HCT116 (cell line): ENCODE measurements at regions of chr15 and their contacts with region 1.

Region 1: GRCh38 chr15:65869127-65869953 is at the start of gene RAB11A:
- DNase-seq: peak; percentile 94
- ATAC-seq: peak; percentile 95
- H3K4me3 ChIP-seq: peak within 1 kb of the TSS; percentile 79 to 94
- H3K27ac ChIP-seq: peak within 1 kb of the TSS; percentile 74
- H3K4me1 ChIP-seq: peaks cover 11 to 30% of the 10 kb centered on the region in 2 experiments
- H3K27me3 ChIP-seq: no peaks in the 10 kb centered on the region
- CTCF ChIP-seq: peak in 1 of 3 experiments; percentile 27; a peak in 2 of 6 replicates
- POLR2A ChIP-seq: peak; percentile 87
- RAD21 ChIP-seq: no peak
- total RNA-seq, gene RAB11A: 234 TPM

Region 2: GRCh38 chr15:65766422-65767263 is 102.7 kb before region 1 on chr15:
- CTCF ChIA-PET with region 1: no interaction called
- POLR2A ChIA-PET with region 1: no interaction called
- RAD21 ChIA-PET with region 1: no interaction called
- intact Hi-C with region 1: no loop called
- DNase-seq: no peak
- ATAC-seq: no peak
- H3K4me3 ChIP-seq: no peak overlapping the region
- H3K27ac ChIP-seq: no peak overlapping the region
- H3K4me1 ChIP-seq: no peaks in the 10 kb centered on the region
- H3K27me3 ChIP-seq: no peaks in the 10 kb centered on the region
- CTCF ChIP-seq: no peak
- POLR2A ChIP-seq: no peak
- RAD21 ChIP-seq: no peak

Region 3: DNA sequence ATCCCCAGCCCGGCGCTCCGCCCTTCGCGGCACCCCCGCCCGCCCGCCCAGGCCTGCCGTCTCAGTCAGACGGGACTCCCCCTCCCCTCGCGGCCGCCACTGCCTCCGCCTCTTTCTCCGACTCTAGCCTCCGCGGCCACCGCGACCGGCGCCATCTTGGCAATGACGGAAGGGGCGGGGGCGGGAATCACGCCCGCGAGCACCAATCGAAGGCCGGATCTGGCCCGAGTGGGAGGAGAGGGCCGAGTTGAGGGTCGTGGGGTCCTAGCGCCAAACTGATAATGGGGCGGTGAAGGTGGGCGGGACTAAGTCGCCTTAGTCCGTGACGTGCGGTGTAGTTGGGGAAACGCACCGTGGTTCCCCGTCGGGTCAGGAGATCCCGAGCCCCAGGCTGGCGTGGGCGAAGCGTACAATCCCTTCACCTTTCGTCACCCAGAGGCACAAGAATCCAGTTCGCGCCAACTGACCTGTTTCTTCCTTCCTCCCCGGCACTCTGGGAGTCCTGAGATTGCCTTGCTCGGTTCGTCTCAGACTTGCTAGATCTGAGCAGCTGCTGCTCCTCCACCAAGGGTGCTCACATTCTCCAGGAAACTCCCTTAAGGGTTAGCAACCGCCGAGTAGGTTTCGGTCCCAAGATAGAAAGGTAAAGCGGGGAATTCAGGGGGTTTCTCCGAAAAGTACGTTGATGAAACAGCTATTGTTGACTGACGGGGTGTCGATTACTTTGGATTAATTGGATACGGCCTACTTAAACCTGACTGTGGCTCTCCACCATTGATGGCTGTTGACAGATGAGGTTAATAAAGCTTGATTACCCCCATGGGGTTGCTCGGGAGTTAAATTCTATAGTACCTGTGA is 77.0 kb before region 1 on chr15 and contains the start of gene DENND4A:
- CTCF ChIA-PET with region 1: no interaction called
- POLR2A ChIA-PET with region 1: interaction called, 4 read pairs
- RAD21 ChIA-PET with region 1: no interaction called
- intact Hi-C with region 1: loop called (anchors 1 kb)
- DNase-seq: peak; percentile 96
- ATAC-seq: peak; percentile 90
- H3K4me3 ChIP-seq: peak within 1 kb of the TSS; percentile 81 to 82
- H3K27ac ChIP-seq: peak within 1 kb of the TSS; percentile 69
- H3K4me1 ChIP-seq: peaks cover 30 to 54% of the 10 kb centered on the region in 2 experiments
- H3K27me3 ChIP-seq: no peaks in the 10 kb centered on the region
- CTCF ChIP-seq: no peak
- POLR2A ChIP-seq: peak; percentile 60
- RAD21 ChIP-seq: no peak
- total RNA-seq, gene DENND4A: 9.1 TPM

Region 4: GRCh38 chr15:65856821-65857455 is 12.4 kb before region 1 on chr15:
- CTCF ChIA-PET with region 1: interaction called, 31 read pairs
- POLR2A ChIA-PET with region 1: interaction called, 3 read pairs
- RAD21 ChIA-PET with region 1: no interaction called
- intact Hi-C with region 1: no loop called
- DNase-seq: peak; percentile 59
- ATAC-seq: peak; percentile 92
- H3K4me3 ChIP-seq: no peak overlapping the region
- H3K27ac ChIP-seq: no peak overlapping the region
- H3K4me1 ChIP-seq: no peaks in the 10 kb centered on the region
- H3K27me3 ChIP-seq: no peaks in the 10 kb centered on the region
- CTCF ChIP-seq: peak; percentile 60 to 94 (median 92)
- POLR2A ChIP-seq: no peak
- RAD21 ChIP-seq: peak; percentile 40